Activated naive CD8-positive, alpha-beta T cell treated with anti-CD3 and anti-CD28 coated beads, Interleukin-2, amount 10 ng/mL, durations not matched to agents 7 days and 5 days (primary cell): ENCODE measurements at regions of chr7 and their contacts with region 1.

Region 1: DNA sequence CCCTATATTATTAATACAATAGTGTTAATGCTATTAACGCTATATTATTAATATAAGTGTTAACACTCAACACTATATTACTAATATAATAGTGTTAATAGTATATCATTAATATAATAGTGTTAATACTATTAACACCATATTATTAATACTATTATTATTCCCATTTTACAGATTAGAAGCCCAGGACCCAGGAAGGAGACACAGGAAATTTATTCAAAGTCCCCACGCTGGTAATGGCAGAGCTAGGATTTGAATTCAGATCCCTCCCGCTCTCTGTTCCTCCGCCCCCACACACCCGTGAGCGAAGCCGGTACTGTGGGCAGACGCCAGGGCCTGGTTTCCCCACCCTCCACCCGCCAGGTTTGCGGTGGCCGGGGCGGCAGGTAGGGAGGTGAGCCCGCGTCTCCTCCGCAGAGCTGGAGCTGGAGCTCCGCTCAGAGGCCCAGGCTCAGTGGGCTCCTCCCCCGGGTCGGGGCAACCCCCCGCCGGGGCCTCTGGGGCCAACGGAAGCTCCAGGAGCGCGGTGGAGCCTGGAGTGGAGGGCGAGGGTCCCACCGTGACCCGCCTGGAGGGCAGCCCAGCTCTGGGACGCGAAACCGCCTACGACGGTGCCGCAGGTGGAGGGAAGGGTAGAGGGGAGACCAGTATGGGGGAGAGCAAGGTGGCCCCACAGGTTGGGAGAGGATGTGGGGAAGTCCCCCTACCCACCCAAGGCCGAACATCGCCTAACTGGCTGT is at the start of gene TMEM225B:
- DNase-seq: peak; percentile 62
- ATAC-seq: peak; percentile 34
- H3K4me3 Mint-ChIP-seq: no peak within 1 kb of the TSS
- H3K27ac Mint-ChIP-seq: no peak within 1 kb of the TSS
- H3K4me1 Mint-ChIP-seq: peaks cover 2% of the 10 kb centered on the region
- H3K27me3 Mint-ChIP-seq: no peaks in the 10 kb centered on the region
- total RNA-seq, gene TMEM225B: 1.2 to 2.3 TPM

Region 2: DNA sequence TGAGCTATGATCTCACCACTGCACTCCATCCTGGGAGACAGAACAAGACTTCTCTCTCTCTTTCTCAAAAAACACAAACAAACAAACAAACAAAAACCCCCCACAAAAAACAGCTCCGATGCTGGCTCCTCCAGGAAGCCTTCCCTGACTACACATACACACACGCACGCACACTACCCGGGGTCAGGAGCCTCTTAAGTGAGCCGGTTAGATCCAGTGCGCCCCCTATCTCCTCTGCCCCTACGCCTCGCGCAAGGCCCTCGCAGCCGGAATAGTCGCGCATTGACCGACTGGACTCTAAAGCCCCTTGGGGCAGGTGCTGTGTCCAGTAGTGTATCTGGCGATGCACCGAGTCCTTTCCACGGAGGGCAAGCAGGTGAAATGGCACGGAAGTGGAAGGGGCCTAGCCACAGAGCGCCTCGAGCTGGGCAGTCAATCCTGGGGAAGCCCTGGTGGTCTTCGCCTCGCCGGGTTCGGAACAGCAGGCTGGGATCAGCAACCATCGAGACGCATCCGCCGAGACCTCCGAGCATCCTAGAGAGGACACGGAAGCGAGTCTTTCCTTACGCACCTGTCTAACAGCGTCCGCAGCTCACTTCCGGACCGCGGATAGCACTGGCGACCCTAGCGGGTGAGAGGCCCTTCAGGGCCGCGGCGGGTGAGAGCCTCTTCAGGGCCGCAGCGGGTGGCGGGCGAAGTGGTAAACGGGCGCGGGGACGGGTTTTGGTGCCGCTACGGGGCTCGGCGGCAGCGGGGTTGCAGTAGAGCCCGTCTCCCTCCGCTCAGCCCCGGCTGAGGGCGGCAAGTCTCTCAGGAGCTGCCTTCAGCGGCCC is 18.6 kb after region 1 on chr7 and contains the start of gene ZSCAN25:
- POLR2A ChIA-PET with region 1: interaction called, 10 read pairs
- DNase-seq: peak; percentile 84
- ATAC-seq: peak; percentile 93
- H3K4me3 Mint-ChIP-seq: peak within 1 kb of the TSS; percentile 93
- H3K27ac Mint-ChIP-seq: peak within 1 kb of the TSS; percentile 97
- H3K4me1 Mint-ChIP-seq: peaks cover 39% of the 10 kb centered on the region
- H3K27me3 Mint-ChIP-seq: no peaks in the 10 kb centered on the region
- total RNA-seq, gene ZSCAN25: 35.5 to 42.5 TPM